ENCODE measurements at regions of chr16 and their contacts with region 1.

Region 1: GRCh38 chr16:54707806-54708205 is 222.9 kb upstream of the IRX5 start:
- DNase-seq: no peak

Region 2: DNA sequence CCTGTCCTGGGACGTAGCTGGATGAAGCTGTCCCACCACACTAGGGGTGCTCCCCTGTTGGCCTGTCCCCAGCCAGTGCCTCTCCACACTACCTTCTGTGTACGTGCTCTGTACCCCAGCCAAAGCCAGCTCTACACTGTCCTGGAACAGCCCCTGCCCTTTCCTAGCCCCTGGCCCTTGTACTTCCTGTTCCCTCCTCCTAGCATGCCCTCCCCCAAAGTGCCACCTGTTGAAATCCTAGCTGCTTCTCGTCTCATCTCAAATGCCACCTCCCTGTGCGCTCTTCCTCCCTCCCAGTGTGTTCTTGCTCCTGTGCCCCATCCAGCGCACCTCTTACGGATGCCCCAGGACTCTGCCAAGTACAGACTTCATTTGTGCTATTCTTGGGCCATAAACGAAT is 454.7 kb before region 1 on chr16:
- intact Hi-C with region 1: no loop called
- DNase-seq: no peak

Region 3: DNA sequence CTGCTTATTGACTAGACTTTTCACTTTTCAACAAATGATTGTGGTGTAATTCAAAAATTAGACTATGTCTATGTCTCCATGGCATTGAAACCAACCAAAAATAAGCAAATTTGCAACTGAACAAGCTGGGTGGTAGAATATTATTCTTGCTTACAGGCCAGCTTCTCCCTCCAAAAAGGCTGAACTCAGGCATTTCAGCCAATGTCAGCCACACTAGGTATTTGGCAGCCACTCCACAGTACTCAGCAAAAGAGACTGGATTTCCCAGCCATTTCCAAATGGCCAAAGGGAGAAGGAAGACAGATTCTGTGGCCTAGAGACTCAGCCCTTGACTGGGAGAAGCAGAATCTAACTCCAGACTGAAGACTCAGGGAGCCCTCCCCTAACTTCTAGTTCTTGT is 101.1 kb after region 1 on chr16:
- intact Hi-C with region 1: no loop called
- DNase-seq: no peak

Region 4: DNA sequence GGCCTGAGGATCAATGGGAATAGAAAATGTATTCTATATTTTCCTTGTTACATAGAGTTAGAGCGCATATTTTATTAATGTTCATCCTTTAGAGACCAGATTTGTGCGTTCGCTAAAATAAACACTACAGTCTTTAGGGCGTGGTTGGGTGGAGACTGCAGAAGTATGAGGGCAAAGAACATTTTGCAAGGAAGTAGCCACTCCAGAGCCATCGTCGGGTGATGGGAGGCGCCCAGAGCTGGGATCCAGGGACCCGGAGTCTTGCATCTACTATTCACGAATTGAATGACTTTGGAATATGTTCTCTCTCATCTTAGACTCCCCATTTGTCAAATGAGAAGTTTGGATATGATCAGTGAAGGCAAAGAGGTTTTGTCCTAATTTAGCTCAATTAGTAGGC is 462.0 kb after region 1 on chr16:
- intact Hi-C with region 1: loop called in 1 of 2 experiments (anchors 5 kb)
- DNase-seq: no peak

Measured in posterior vena cava (tissue), 2 donors.